Left ventricle myocardium inferior (tissue), 1 donor: ENCODE measurements at regions of chr13 and their contacts with region 1.

Region 1: GRCh38 chr13:111066544-111066943 is 48.6 kb upstream of the ARHGEF7 start:
- DNase-seq: peak; percentile 30
- H3K4me3 ChIP-seq: peak overlapping the region; percentile 81
- H3K27ac ChIP-seq: peak overlapping the region; percentile 72
- H3K4me1 ChIP-seq: peaks cover 12% of the 10 kb centered on the region
- H3K27me3 ChIP-seq: peaks cover 16% of the 10 kb centered on the region
- CTCF ChIP-seq: no peak

Region 2: DNA sequence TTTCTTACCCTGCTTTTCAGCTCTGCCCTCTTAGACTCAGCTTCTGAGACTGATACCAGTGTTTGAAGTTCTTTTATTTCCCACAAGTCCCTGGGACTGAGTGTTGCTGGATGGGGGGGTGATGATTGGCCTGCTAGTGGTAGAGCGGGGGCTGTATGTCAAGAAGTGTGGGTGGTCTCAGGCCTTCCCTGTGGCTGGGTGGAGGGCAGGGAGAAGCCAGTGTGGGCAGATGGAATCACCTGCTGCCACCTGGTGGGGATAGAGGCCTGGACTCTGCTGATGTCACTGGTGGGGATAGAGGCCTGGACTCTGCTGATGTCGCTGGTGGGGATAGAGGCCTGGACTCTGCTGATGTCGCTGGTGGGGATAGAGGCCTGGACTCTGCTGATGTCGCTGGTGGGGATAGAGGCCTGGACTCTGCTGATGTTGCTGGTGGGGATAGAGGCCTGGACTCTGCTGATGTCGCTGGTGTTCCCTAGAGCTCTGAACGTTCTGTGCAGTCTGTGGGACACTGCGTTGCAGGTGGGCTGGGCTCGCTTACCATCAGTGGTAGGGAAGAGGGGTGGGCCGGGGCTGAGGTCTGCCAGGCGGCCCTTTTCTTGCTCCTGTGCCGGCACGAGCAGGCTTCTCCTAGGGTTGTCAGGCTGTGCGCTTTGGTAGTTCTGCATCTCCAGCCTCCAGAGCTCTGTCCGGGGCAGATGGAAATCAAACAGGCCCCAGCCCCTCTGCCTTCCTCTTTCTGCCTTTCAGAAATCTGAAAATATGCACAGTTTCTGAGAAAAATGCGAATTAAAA is 149.8 kb after region 1 on chr13:
- intact Hi-C with region 1: loop called (anchors 10 kb)
- DNase-seq: no peak
- H3K4me3 ChIP-seq: no peak overlapping the region
- H3K27ac ChIP-seq: peak overlapping the region; percentile 44
- H3K4me1 ChIP-seq: peaks cover 95% of the 10 kb centered on the region
- H3K27me3 ChIP-seq: no peaks in the 10 kb centered on the region
- CTCF ChIP-seq: peak; percentile 64